Naive thymus-derived CD4-positive, alpha-beta T cell (primary cell): ENCODE measurements at regions of chr3 and their contacts with region 1.

Region 1: DNA sequence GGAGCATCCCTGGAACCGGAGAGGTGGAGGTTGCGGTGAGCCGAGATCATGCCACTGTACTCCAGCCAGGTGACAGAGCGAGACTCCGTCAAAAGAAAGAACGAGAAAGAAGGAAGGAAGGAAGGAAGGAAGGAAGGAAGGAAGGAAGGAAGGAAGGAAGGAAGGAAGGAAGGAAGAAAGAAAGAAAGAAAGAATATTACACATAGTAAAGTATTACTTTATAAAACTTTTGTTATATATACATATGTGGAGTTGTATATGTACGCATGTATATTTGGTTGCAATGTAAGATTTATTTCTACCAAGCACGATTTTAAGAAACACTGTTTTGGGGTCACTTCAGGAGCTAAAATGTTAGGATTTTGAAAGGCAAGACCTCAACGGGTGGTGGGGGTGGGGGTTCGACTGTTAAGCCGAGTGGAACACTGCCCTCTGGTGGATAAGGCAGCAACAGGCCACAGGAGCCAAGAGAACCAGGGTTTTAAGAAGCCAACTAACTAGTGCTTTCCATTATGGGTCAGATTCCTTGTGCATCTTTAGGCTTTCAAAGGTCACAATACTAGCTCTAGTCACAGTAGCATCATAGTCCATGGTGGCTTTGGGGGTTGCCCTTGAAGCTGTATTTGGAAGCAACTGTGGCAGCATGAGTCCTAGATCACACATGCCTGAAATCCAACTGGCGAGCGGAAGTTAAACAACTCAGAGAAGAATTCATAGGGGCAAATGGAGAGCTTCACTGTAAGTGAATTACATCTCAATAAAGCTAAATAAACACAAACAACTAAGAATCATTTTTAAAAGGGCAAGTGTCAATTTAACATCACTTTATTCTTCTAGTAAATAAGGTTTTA is 22.5 kb downstream of the GLB1 start:
- DNase-seq: peak; percentile 24 to 67 (median 59)
- ATAC-seq: peak; percentile 88
- H3K4me3 ChIP-seq: no peak overlapping the region
- H3K4me3 Mint-ChIP-seq: peak overlapping the region in 1 of 10 donors; percentile 39
- H3K27ac ChIP-seq: no peak overlapping the region
- H3K27ac Mint-ChIP-seq: no peak overlapping the region
- H3K4me1 ChIP-seq: peaks cover 0 to 4% of the 10 kb centered on the region in 2 donors
- H3K4me1 Mint-ChIP-seq: peaks cover 11 to 39% (median 25%) of the 10 kb centered on the region in 7 donors
- H3K27me3 ChIP-seq: no peaks in the 10 kb centered on the region
- H3K27me3 Mint-ChIP-seq: no peaks in the 10 kb centered on the region

Region 2: GRCh38 chr3:32510075-32510724 is 564.2 kb before region 1 on chr3:
- CTCF ChIA-PET with region 1: no interaction called
- POLR2A ChIA-PET with region 1: no interaction called
- intact Hi-C with region 1: loop called in 1 of 2 experiments (anchors 1 kb)
- DNase-seq: peak; percentile 30 to 75 (median 63)
- ATAC-seq: peak; percentile 97
- H3K4me3 ChIP-seq: no peak overlapping the region
- H3K4me3 Mint-ChIP-seq: no peak overlapping the region
- H3K27ac ChIP-seq: no peak overlapping the region
- H3K27ac Mint-ChIP-seq: no peak overlapping the region
- H3K4me1 ChIP-seq: no peaks in the 10 kb centered on the region
- H3K4me1 Mint-ChIP-seq: peaks cover 0 to 5% (median 2%) of the 10 kb centered on the region in 7 donors
- H3K27me3 ChIP-seq: no peaks in the 10 kb centered on the region
- H3K27me3 Mint-ChIP-seq: peaks cover 0 to under 1% (median 0%) of the 10 kb centered on the region in 5 donors

Region 3: DNA sequence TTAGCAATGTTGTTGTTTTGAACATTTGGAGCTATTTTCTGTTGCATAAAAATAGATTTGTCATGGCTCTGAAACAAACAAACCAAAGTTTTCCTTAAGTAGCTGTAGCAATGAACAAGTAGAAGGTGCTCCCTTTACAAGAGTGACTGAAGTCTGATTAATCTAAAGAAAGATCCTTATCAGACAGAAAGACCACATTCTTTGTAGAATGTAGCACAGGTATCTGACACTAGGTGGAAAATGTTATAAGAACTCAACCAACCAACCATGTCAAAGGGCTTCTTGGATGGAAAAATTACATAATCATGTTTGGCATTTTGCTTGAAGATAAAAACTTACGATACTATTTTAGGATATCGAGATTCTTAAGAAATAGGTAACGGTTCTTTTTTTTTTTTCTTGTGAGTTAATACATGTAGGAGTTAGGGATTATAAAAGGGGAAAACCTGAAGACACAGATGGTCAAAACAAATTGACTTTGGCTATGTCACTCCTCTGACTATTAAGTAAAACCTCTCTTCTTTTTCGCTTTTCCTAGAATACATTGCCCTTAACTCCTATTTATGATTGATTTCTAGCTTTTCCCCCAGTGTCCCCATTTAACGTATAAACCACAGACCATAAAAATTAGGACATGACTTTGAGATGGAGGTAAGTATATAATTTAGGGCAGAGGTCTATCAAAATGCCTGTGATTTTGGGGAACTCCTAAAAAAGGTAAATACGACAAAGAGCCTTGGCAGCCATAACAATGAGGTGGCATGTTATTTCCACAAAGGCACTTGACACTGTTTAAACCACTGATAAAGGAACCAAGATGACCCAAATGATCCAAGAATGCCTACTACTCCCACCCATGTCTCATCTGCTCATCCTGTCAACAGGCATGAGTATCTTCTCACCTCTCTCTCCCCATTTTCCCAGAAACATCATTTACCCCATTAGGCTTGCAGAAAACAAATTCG is 51.0 kb before region 1 on chr3:
- CTCF ChIA-PET with region 1: interaction called, 5 read pairs
- POLR2A ChIA-PET with region 1: no interaction called
- intact Hi-C with region 1: loop called in 1 of 2 experiments (anchors 1 kb)
- DNase-seq: peak in 6 of 9 donors; percentile 5 to 34 (median 26)
- ATAC-seq: peak; percentile 76
- H3K4me3 ChIP-seq: no peak overlapping the region
- H3K4me3 Mint-ChIP-seq: peak overlapping the region in 4 of 10 donors; percentile 1 to 37 (median 20)
- H3K27ac ChIP-seq: no peak overlapping the region
- H3K27ac Mint-ChIP-seq: peak overlapping the region in 5 of 9 donors; percentile 13 to 56 (median 44)
- H3K4me1 ChIP-seq: peaks cover 13 to 15% of the 10 kb centered on the region in 2 donors
- H3K4me1 Mint-ChIP-seq: peaks cover 15 to 54% (median 40%) of the 10 kb centered on the region in 7 donors
- H3K27me3 ChIP-seq: no peaks in the 10 kb centered on the region
- H3K27me3 Mint-ChIP-seq: no peaks in the 10 kb centered on the region

Region 4: DNA sequence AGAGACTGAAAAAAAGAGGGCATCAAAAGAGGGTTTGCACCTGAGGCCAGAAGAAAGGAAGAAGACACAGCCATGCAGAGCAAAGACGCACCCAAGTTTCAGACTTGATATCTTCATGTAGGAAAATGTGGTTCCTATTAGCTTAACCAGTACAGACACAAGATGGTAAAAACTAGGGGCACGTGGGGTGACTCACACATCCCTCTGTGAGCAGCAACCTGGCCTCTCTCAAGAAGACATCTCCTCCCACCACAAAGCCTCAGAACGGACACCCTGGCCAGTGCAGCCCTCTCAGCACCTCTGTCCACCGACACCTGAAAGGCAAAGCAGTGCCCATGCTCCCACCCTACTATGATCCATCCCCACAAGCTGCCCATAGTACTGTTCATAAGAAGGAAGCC is 10.8 kb before region 1 on chr3:
- CTCF ChIA-PET with region 1: interaction called, 10 read pairs
- POLR2A ChIA-PET with region 1: interaction called, 7 read pairs
- intact Hi-C with region 1: loop called in 1 of 2 experiments (anchors 1 kb)
- DNase-seq: peak in 1 of 9 donors; percentile 61
- ATAC-seq: peak; percentile 47
- H3K4me3 ChIP-seq: no peak overlapping the region
- H3K4me3 Mint-ChIP-seq: peak overlapping the region in 9 of 10 donors; percentile 8 to 68 (median 43)
- H3K27ac ChIP-seq: no peak overlapping the region
- H3K27ac Mint-ChIP-seq: peak overlapping the region; percentile 1 to 85 (median 39)
- H3K4me1 ChIP-seq: peaks cover 44 to 55% of the 10 kb centered on the region in 2 donors
- H3K4me1 Mint-ChIP-seq: peaks cover 35 to 55% (median 48%) of the 10 kb centered on the region in 7 donors
- H3K27me3 ChIP-seq: no peaks in the 10 kb centered on the region
- H3K27me3 Mint-ChIP-seq: no peaks in the 10 kb centered on the region

Region 5: DNA sequence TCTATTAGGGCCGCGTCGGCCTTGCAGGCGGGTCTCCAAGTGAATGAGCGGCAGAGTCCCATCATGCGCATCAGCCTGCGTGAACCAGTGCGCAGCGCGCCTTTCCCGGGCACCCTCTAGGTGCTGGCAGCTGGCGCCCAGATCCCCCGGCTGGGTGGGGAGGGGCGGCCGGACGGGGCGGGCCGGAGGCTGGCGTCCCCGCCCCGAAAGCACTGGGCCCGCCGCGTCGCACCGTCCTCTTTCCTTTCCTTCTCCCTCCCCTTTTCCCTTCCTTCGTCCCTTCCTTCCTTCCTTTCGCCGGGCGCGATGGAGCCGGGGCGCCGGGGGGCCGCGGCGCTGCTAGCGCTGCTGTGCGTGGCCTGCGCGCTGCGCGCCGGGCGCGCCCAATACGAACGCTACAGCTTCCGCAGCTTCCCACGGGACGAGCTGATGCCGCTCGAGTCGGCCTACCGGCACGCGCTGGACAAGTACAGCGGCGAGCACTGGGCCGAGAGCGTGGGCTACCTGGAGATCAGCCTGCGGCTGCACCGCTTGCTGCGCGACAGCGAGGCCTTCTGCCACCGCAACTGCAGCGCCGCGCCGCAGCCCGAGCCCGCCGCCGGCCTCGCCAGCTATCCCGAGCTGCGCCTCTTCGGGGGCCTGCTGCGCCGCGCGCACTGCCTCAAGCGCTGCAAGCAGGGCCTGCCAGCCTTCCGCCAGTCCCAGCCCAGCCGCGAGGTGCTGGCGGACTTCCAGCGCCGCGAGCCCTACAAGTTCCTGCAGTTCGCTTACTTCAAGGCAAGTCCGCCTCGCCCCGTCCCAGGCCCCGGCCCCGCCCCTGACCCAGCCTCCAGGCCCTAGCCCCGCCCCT is 39.6 kb after region 1 on chr3 and contains the start of gene CRTAP:
- CTCF ChIA-PET with region 1: interaction called, 3 read pairs
- POLR2A ChIA-PET with region 1: no interaction called
- intact Hi-C with region 1: loop called in 1 of 2 experiments (anchors 5 kb)
- DNase-seq: peak; percentile 69 to 86 (median 79)
- ATAC-seq: peak; percentile 92
- H3K4me3 ChIP-seq: peak within 1 kb of the TSS; percentile 82
- H3K4me3 Mint-ChIP-seq: peak within 1 kb of the TSS; percentile 88 to 95 (median 92)
- H3K27ac ChIP-seq: peak within 1 kb of the TSS; percentile 69
- H3K27ac Mint-ChIP-seq: peak within 1 kb of the TSS; percentile 75 to 91 (median 85)
- H3K4me1 ChIP-seq: peaks cover 17 to 23% of the 10 kb centered on the region in 2 donors
- H3K4me1 Mint-ChIP-seq: peaks cover 23 to 52% (median 37%) of the 10 kb centered on the region in 7 donors
- H3K27me3 ChIP-seq: no peaks in the 10 kb centered on the region
- H3K27me3 Mint-ChIP-seq: no peaks in the 10 kb centered on the region
- total RNA-seq, gene CRTAP: 27.1 to 86.1 (median 46.4) TPM